IMR-90 (cell line): ENCODE measurements at regions of chr6 and their contacts with region 1.

Region 1: GRCh38 chr6:36678518-36679027 is at the start of gene CDKN1A:
- DNase-seq: peak; percentile 93
- ATAC-seq: peak; percentile 77
- H3K4me3 ChIP-seq: peak within 1 kb of the TSS; percentile 89
- H3K27ac ChIP-seq: peak within 1 kb of the TSS; percentile 88
- H3K4me1 ChIP-seq: peaks cover 22% of the 10 kb centered on the region
- H3K27me3 ChIP-seq: no peaks in the 10 kb centered on the region
- CTCF ChIP-seq: no peak; the same call in 1 of the 2 replicates
- POLR2A ChIP-seq: peak; percentile 99
- RAD21 ChIP-seq: no peak; the same call in 1 of the 2 replicates
- total RNA-seq, gene CDKN1A: 155 and 171 TPM in 2 replicates

Region 2: DNA sequence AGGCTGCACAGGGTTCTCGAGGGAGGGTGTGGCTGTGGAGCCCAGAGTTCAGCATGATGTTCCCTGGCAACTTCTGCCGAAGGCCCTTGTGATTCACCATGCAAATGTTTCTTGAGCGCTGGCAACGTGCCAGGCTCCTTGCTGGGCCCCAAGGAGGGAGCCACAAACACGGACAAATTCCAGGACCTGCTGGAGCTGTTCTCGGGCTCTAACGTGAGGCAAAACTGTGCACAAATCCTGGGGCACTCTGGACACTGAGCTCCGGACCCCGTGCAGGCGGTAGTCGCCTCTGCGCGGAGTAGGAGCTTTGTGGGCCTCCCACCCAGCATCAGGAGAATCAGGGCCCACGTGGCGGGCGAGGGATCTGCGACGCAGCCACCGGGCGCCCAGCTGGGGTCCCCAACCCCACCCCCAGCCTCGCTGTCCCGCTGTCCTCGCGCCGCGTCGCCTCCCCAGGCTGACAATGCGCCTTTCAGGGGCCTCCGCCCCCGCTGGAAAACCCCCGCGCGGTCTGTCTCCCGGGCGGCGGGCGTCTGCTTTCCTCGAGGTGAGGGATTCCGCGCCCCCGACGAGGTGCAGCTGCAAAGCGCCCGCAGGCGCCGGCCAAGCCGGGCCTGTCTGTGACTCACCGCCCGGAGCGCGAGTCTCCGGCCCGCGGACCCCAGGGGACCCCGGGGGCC is 1496.5 kb before region 1 on chr6:
- CTCF ChIA-PET with region 1: no interaction called
- POLR2A ChIA-PET with region 1: no interaction called
- dilution Hi-C with region 1: no loop called
- in situ Hi-C with region 1: no loop called
- intact Hi-C with region 1: no loop called
- DNase-seq: peak; percentile 61
- ATAC-seq: peak; percentile 37
- H3K4me3 ChIP-seq: no peak overlapping the region
- H3K27ac ChIP-seq: peak overlapping the region; percentile 30; the same call in 1 of the 2 replicates
- H3K4me1 ChIP-seq: peaks cover 39% of the 10 kb centered on the region
- H3K27me3 ChIP-seq: no peaks in the 10 kb centered on the region
- CTCF ChIP-seq: no peak
- POLR2A ChIP-seq: no peak
- RAD21 ChIP-seq: no peak

Region 3: DNA sequence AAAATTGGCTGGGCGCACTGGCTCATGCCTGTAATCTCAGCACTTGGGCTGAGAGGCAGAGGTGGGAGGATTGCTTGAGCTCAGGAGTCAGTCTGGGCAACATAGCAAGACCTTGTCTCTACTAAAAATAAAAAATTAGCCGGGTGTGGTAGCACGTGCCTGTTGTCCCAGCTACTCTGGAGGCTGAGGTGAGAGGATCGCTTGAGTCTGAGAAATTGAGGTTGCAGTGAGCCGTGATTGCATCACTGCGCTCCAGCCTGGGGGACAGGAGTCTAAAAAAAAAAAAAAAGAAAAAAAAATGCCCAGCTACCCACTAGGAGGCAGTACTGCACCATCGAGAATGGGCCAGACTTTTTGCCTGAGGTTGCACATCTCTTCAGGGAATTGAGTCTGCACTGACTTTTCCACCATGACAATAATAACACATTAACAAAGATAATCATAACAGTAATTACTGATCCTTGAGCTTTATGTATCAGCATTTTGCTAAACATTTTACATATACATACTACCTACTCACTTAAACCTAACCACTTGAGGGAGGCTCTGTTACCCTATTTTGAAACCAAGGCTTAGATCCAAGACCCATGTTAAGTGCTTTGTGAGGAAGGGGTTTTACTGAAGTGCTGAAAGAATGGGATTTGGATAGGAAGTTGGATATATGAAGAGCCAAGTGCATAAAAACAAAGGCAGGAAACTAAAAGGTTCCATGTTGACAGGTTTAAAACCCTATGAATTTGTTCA is 63.4 kb before region 1 on chr6:
- CTCF ChIA-PET with region 1: interaction called, 3 read pairs
- POLR2A ChIA-PET with region 1: no interaction called
- dilution Hi-C with region 1: no loop called
- in situ Hi-C with region 1: loop called (anchors 5 kb)
- intact Hi-C with region 1: loop called (anchors 2 kb)
- DNase-seq: peak; percentile 69
- ATAC-seq: peak; percentile 67
- H3K4me3 ChIP-seq: no peak overlapping the region
- H3K27ac ChIP-seq: no peak overlapping the region
- H3K4me1 ChIP-seq: no peaks in the 10 kb centered on the region
- H3K27me3 ChIP-seq: no peaks in the 10 kb centered on the region
- CTCF ChIP-seq: peak; percentile 93
- POLR2A ChIP-seq: 0 out of 2 replicates have a peak, but pooled peaks have one; percentile 38
- RAD21 ChIP-seq: peak; percentile 90

Region 4: DNA sequence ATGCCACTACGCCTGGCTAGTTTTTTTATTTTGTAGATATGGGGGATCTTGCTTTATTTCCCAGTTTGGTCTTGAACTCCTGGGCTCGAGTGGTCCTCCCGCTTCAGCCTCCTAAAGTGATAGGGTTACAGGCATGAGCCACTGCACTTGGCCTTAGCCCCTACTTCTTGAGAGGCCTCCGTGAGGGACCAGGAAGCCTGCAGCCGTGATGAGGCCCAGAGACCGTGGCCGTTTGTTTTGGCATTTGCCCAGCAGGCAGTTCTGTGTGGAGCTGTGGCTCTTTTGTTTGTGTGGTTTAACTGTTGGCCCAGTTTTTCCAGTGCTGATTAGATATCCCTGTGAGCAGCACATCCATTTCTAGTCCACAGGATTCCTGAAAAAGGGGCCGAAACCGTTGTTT is 44.7 kb before region 1 on chr6:
- CTCF ChIA-PET with region 1: no interaction called
- POLR2A ChIA-PET with region 1: interaction called, 10 read pairs
- dilution Hi-C with region 1: no loop called
- in situ Hi-C with region 1: no loop called
- intact Hi-C with region 1: no loop called
- DNase-seq: peak; percentile 87
- ATAC-seq: peak; percentile 90
- H3K4me3 ChIP-seq: no peak overlapping the region
- H3K27ac ChIP-seq: peak overlapping the region; percentile 58; the same call in 1 of the 2 replicates
- H3K4me1 ChIP-seq: peaks cover 7% of the 10 kb centered on the region; the same call in 1 of the 2 replicates
- H3K27me3 ChIP-seq: no peaks in the 10 kb centered on the region
- CTCF ChIP-seq: no peak
- POLR2A ChIP-seq: no peak
- RAD21 ChIP-seq: 0 out of 2 replicates have a peak, but pooled peaks have one; percentile 6

Region 5: DNA sequence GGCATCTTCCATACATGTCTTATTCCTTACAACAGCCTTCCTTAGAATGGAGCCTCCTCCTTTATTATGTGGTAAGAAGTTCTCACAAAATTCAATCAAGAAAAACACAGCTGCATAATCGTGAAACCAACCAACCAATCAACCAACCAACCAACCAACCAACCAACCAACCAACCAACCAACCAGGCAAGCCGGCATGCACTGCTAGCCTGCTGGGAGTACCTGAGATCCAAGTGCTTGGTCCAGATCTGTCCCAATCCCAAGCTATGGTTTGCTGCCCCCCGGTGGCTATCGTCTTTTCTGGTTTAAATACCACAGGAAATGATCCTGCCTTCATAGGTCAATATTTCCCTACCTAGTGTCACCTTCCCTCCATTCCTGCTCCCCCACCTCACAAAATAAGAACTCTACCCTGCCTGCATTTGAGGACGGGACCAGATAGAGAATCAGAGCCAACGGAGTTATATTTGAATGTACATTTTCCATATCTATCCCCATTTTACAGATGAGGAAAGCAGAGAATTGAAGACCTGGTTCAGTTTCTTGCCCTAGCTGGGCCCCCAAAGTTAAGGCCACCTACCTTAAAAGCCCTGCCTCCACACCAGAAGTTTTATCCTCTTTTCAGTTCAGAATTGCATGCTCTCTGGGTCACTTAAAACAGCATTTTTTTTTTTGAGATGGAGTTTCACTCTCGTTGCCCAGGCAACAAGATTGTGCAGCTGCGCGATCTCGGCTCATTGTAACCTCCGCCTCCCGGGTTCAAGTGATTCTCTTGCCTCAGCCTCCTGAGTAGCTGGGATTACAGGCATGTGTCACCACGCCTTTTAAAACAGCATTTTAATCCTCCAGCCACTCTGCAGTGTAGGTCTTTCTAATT is 46.2 kb after region 1 on chr6:
- CTCF ChIA-PET with region 1: no interaction called
- POLR2A ChIA-PET with region 1: no interaction called
- dilution Hi-C with region 1: no loop called
- in situ Hi-C with region 1: no loop called
- intact Hi-C with region 1: loop called (anchors 1 kb)
- DNase-seq: peak; percentile 65
- ATAC-seq: peak; percentile 90
- H3K4me3 ChIP-seq: no peak overlapping the region
- H3K27ac ChIP-seq: no peak overlapping the region
- H3K4me1 ChIP-seq: no peaks in the 10 kb centered on the region
- H3K27me3 ChIP-seq: peaks cover 8% of the 10 kb centered on the region; the same call in 1 of the 2 replicates
- CTCF ChIP-seq: peak; percentile 73
- POLR2A ChIP-seq: no peak
- RAD21 ChIP-seq: peak; percentile 80

Region 6: GRCh38 chr6:36955671-36956445 is 277.3 kb after region 1 on chr6:
- CTCF ChIA-PET with region 1: no interaction called
- POLR2A ChIA-PET with region 1: no interaction called
- dilution Hi-C with region 1: no loop called
- in situ Hi-C with region 1: no loop called
- intact Hi-C with region 1: no loop called
- DNase-seq: no peak
- ATAC-seq: no peak
- H3K4me3 ChIP-seq: no peak overlapping the region
- H3K27ac ChIP-seq: no peak overlapping the region
- H3K4me1 ChIP-seq: peaks cover 3% of the 10 kb centered on the region
- H3K27me3 ChIP-seq: peaks cover 3% of the 10 kb centered on the region; the same call in 1 of the 2 replicates
- CTCF ChIP-seq: no peak
- POLR2A ChIP-seq: no peak
- RAD21 ChIP-seq: no peak